ENCODE measurements at regions of chr2 and their contacts with region 1.

Region 1: DNA sequence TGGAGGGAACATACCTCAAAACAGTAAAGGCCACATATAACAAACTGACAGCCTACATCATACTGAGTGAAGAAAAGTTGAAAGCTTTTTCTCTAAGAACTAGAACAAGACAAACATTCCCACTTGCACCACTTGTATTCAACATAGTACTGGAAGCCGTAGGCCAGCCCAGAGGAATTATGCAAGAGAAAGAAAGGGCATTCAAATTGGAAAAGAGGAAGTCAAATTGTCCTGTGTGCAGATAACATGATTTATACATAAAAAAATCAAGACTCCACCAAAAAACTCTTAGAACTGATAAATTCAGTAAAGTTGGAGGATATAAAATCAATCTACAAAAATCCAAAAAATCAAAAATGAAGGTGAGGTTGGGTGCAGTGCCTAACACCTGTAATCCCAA is 8.0 kb upstream of the KDM3A start:
- DNase-seq: no peak
- ATAC-seq: no peak
- H3K4me3 ChIP-seq: no peak overlapping the region
- H3K4me3 Mint-ChIP-seq: no peak overlapping the region
- H3K27ac ChIP-seq: no peak overlapping the region
- H3K27ac Mint-ChIP-seq: no peak overlapping the region
- H3K4me1 ChIP-seq: no peaks in the 10 kb centered on the region
- H3K4me1 Mint-ChIP-seq: no peaks in the 10 kb centered on the region
- H3K27me3 ChIP-seq: no peaks in the 10 kb centered on the region
- H3K27me3 Mint-ChIP-seq: peaks cover 5% of the 10 kb centered on the region
- CTCF ChIP-seq: no peak

Region 2: GRCh38 chr2:86393521-86394491 is 39.3 kb before region 1 on chr2:
- CTCF ChIA-PET with region 1: no interaction called
- POLR2A ChIA-PET with region 1: no interaction called
- intact Hi-C with region 1: loop called in 1 of 2 experiments (anchors 5 kb)
- DNase-seq: no peak
- ATAC-seq: no peak
- H3K4me3 ChIP-seq: no peak overlapping the region
- H3K4me3 Mint-ChIP-seq: no peak overlapping the region
- H3K27ac ChIP-seq: no peak overlapping the region
- H3K27ac Mint-ChIP-seq: no peak overlapping the region
- H3K4me1 ChIP-seq: no peaks in the 10 kb centered on the region
- H3K4me1 Mint-ChIP-seq: peaks cover 16% of the 10 kb centered on the region
- H3K27me3 ChIP-seq: no peaks in the 10 kb centered on the region
- H3K27me3 Mint-ChIP-seq: peaks cover 8% of the 10 kb centered on the region
- CTCF ChIP-seq: no peak

Measured in CD4-positive, alpha-beta T cell (primary cell).